ENCODE measurements at regions of chr17 and their contacts with region 1.

Region 1: GRCh38 chr17:42997984-42998938 is at the start of gene RPL27:
- DNase-seq: peak; percentile 100
- H3K4me3 ChIP-seq: peak within 1 kb of the TSS; percentile 56 to 86 (median 58)
- H3K27ac ChIP-seq: peak within 1 kb of the TSS; percentile 75
- H3K4me1 ChIP-seq: peaks cover 23% of the 10 kb centered on the region
- H3K27me3 ChIP-seq: no peaks in the 10 kb centered on the region
- CTCF ChIP-seq: peak; percentile 68 to 77
- POLR2A ChIP-seq: peak; percentile 94
- total RNA-seq, gene RPL27: 1,014 and 1,102 TPM in 2 replicates

Region 2: GRCh38 chr17:42677008-42677857 is 321.0 kb before region 1 on chr17:
- CTCF ChIA-PET with region 1: interaction called, 3 read pairs
- POLR2A ChIA-PET with region 1: no interaction called
- dilution Hi-C with region 1: no loop called
- intact Hi-C with region 1: loop called (anchors 2 kb)
- DNase-seq: peak; percentile 100
- H3K4me3 ChIP-seq: peak overlapping the region in 2 of 3 experiments; percentile 70 to 87
- H3K27ac ChIP-seq: peak overlapping the region; percentile 47
- H3K4me1 ChIP-seq: peaks cover 42% of the 10 kb centered on the region
- H3K27me3 ChIP-seq: no peaks in the 10 kb centered on the region
- CTCF ChIP-seq: no peak
- POLR2A ChIP-seq: peak; percentile 24

Region 3: GRCh38 chr17:42843358-42843934 is 154.8 kb before region 1 on chr17:
- CTCF ChIA-PET with region 1: interaction called, 25 read pairs
- POLR2A ChIA-PET with region 1: no interaction called
- dilution Hi-C with region 1: no loop called
- intact Hi-C with region 1: loop called (anchors 1 kb)
- DNase-seq: peak; percentile 69
- H3K4me3 ChIP-seq: no peak overlapping the region
- H3K27ac ChIP-seq: no peak overlapping the region
- H3K4me1 ChIP-seq: no peaks in the 10 kb centered on the region
- H3K27me3 ChIP-seq: no peaks in the 10 kb centered on the region
- CTCF ChIP-seq: peak; percentile 91 to 92
- POLR2A ChIP-seq: no peak

Region 4: DNA sequence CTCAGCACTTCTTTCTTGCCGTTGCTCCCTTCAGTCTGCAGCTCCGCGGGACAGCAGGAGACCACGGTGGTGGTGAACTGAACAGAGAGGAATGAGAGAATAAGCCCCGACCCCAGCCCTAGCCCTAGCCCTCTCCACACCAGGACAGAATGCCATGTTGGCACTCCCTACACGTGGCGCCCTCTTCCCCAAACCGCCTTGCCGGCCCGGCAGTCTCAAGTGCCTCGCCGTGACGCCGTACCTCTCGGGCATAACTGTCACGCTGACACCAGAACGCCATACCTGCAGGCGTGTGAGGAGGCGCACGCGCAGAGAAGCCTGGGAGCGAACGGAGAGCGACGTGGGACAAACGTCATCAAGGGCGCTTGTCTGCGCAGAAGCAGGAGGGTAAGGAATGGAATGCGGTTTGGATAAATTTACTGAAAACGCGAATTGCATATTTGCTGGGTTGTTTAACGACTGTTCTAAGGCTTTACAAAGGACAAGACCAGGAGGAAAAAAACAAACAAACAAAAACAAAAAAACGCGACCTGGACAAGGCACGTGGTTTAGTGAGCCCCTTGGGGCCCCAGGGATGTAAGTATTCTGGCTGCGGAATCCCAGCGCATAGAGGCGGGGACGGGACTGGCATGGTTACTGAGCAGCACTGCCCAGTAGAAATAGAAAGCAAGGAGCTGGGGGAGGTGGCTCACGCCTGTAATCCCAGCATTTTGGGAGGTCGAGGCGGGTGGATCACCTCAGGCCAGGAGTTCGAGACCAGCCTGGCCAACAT is 33.9 kb before region 1 on chr17 and contains the start of gene AARSD1:
- CTCF ChIA-PET with region 1: interaction called, 14 read pairs
- POLR2A ChIA-PET with region 1: interaction called, 7 read pairs
- dilution Hi-C with region 1: no loop called
- intact Hi-C with region 1: loop called (anchors 1 kb)
- DNase-seq: peak; percentile 97
- H3K4me3 ChIP-seq: peak within 1 kb of the TSS; percentile 47 to 83 (median 63)
- H3K27ac ChIP-seq: peak within 1 kb of the TSS; percentile 64
- H3K4me1 ChIP-seq: peaks cover 6% of the 10 kb centered on the region
- H3K27me3 ChIP-seq: no peaks in the 10 kb centered on the region
- CTCF ChIP-seq: no peak
- POLR2A ChIP-seq: peak; percentile 85
- total RNA-seq, gene AARSD1: 39.7 and 53.2 TPM in 2 replicates

Region 5: GRCh38 chr17:42980398-42981397 is 17.6 kb before region 1 on chr17 and contains the start of gene RUNDC1:
- CTCF ChIA-PET with region 1: interaction called, 22 read pairs
- POLR2A ChIA-PET with region 1: interaction called, 8 read pairs
- dilution Hi-C with region 1: no loop called
- intact Hi-C with region 1: loop called (anchors 2 kb)
- DNase-seq: peak; percentile 85
- H3K4me3 ChIP-seq: peak within 1 kb of the TSS; percentile 10 to 88 (median 11)
- H3K27ac ChIP-seq: peak within 1 kb of the TSS; percentile 1
- H3K4me1 ChIP-seq: peaks cover 23% of the 10 kb centered on the region
- H3K27me3 ChIP-seq: no peaks in the 10 kb centered on the region
- CTCF ChIP-seq: no peak
- POLR2A ChIP-seq: peak; percentile 79
- total RNA-seq, gene RUNDC1: 11.7 and 12.0 TPM in 2 replicates

Region 6: GRCh38 chr17:43042025-43042628 is 43.9 kb after region 1 on chr17:
- CTCF ChIA-PET with region 1: no interaction called
- POLR2A ChIA-PET with region 1: no interaction called
- dilution Hi-C with region 1: no loop called
- intact Hi-C with region 1: no loop called
- DNase-seq: no peak
- H3K4me3 ChIP-seq: no peak overlapping the region
- H3K27ac ChIP-seq: no peak overlapping the region
- H3K4me1 ChIP-seq: no peaks in the 10 kb centered on the region
- H3K27me3 ChIP-seq: no peaks in the 10 kb centered on the region
- CTCF ChIP-seq: no peak
- POLR2A ChIP-seq: no peak

Region 7: DNA sequence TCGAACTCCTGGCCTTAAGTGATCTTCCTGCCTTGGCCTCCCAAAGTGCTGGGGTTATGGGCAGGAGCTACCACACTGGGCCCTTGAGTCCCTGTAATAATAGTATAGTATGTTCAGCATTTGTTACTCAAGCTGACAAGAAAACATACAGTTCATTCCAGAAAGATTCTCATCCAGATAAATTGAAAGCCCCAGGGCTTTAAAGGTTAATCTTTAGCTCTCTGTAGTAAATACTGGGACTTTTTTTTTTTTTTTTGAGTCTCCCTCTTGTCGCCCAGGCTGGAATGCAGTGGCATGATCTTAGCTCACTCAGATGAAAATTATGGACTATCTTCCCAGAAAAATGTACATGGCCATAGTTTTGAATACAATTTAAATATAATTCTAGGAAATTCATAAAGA is 115.9 kb after region 1 on chr17:
- CTCF ChIA-PET with region 1: no interaction called
- POLR2A ChIA-PET with region 1: no interaction called
- dilution Hi-C with region 1: no loop called
- intact Hi-C with region 1: no loop called
- DNase-seq: no peak
- H3K4me3 ChIP-seq: no peak overlapping the region
- H3K27ac ChIP-seq: no peak overlapping the region
- H3K4me1 ChIP-seq: no peaks in the 10 kb centered on the region
- H3K27me3 ChIP-seq: no peaks in the 10 kb centered on the region
- CTCF ChIP-seq: no peak
- POLR2A ChIP-seq: no peak

Region 8: GRCh38 chr17:43125133-43125966 is 127.1 kb after region 1 on chr17 and contains the start of gene BRCA1:
- CTCF ChIA-PET with region 1: no interaction called
- POLR2A ChIA-PET with region 1: no interaction called
- dilution Hi-C with region 1: no loop called
- intact Hi-C with region 1: loop called (anchors 2 kb)
- DNase-seq: peak; percentile 98
- H3K4me3 ChIP-seq: peak within 1 kb of the TSS; percentile 64 to 92 (median 86)
- H3K27ac ChIP-seq: peak within 1 kb of the TSS; percentile 67
- H3K4me1 ChIP-seq: peaks cover 14% of the 10 kb centered on the region
- H3K27me3 ChIP-seq: no peaks in the 10 kb centered on the region
- CTCF ChIP-seq: no peak
- POLR2A ChIP-seq: peak; percentile 69
- total RNA-seq, gene BRCA1: 25.7 and 29.0 TPM in 2 replicates

Region 9: GRCh38 chr17:43170766-43171585 is 172.7 kb after region 1 on chr17 and contains the start of gene NBR1:
- CTCF ChIA-PET with region 1: interaction called, 4 read pairs
- POLR2A ChIA-PET with region 1: interaction called, 4 read pairs
- dilution Hi-C with region 1: no loop called
- intact Hi-C with region 1: loop called (anchors 1 kb)
- DNase-seq: peak; percentile 99
- H3K4me3 ChIP-seq: peak within 1 kb of the TSS; percentile 47 to 75 (median 73)
- H3K27ac ChIP-seq: peak within 1 kb of the TSS; percentile 68
- H3K4me1 ChIP-seq: peaks cover 22% of the 10 kb centered on the region
- H3K27me3 ChIP-seq: no peaks in the 10 kb centered on the region
- CTCF ChIP-seq: no peak
- POLR2A ChIP-seq: peak; percentile 64
- total RNA-seq, gene NBR1: 52.1 and 57.0 TPM in 2 replicates

Measured in endothelial cell of umbilical vein (primary cell).